ENCODE measurements at regions of chr14 and their contacts with region 1.

Region 1: DNA sequence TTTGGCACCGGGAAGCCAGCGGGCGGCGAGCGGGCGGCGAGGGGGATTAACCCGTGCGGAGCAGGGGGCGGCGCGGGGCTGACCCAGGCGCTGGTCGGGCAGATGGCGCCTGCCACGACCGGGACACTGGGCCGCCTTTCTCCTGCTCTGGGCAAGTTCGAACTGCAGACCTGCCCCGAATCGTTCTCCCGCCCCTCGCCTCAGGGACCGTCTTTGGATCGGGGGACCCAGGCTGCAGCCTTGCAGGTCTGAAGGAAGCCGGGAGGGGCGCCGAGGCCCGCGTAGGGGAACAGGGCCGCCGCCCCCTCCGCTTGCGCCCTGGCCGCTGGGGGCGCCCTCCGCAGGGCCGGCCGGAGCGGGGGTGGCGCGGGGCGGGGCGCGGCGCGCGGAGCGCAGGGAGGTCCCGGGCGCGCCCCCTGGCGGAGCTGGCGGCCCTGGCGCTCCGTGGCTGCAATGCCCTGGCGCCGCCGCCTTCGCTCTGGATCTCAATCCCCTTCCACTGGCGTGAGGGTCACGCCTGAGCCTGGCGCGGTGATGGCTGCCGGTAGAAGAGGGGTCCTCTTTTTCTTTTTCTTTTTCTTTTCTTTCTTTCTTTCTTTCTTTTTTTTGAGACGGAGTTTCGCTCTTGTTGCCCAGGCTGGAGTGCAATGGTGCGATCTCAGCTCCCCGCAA is 449 bp upstream of the LTBP2 start:
- DNase-seq: peak; percentile 95
- H3K4me3 ChIP-seq: peak overlapping the region; percentile 68 to 73
- H3K27ac ChIP-seq: peak overlapping the region; percentile 75 to 99
- H3K4me1 ChIP-seq: peaks cover 17 to 37% of the 10 kb centered on the region in 2 experiments; a peak in 3 of 4 replicates
- H3K27me3 ChIP-seq: no peaks in the 10 kb centered on the region
- CTCF ChIP-seq: peak; percentile 63
- EP300 ChIP-seq: peak in 1 of 2 experiments; percentile 38; a peak in 1 of 4 replicates
- RAD21 ChIP-seq: peak; percentile 54

Region 2: DNA sequence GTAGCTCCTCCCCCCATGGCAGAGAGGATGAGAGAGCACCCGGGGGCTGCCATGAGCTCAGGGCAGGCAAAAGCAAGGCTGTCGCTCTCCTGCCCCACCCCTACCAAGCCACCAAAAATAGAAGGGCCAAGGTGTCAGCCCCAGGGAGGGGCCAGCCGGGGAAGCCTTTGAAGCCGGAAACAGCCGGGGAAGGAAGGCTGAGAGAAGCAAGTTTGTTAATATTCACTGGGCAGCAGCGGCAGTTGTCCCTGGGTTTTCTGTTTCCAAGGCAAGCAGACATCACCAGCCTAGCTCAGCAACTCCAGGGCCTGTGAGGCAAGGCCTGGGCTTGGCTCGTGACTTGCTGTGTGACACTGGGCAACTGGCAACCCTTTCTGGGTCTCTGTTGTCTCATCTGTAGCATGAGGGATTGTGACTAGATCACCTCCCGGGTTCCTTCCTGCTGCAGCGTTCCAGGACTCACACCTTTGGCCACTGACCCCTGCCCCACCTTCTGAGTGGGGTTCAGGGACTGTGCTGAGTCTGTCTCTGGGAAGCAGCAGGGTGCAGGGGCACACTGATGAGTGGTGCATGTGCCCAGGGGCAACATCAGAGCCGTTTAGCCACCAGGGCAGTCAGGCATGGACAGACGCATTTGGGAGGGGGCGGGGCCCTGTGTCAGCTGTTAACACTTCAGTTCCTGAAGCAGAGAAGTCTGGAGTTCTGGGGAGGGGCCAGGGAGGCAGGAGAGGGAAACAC is 210.8 kb before region 1 on chr14:
- CTCF ChIA-PET with region 1: no interaction called
- POLR2A ChIA-PET with region 1: no interaction called
- DNase-seq: peak; percentile 63
- H3K4me3 ChIP-seq: no peak overlapping the region
- H3K27ac ChIP-seq: no peak overlapping the region
- H3K4me1 ChIP-seq: peaks cover 0 to 10% of the 10 kb centered on the region in 2 experiments; a peak in 1 of 4 replicates
- H3K27me3 ChIP-seq: peaks cover 37% of the 10 kb centered on the region
- CTCF ChIP-seq: no peak
- EP300 ChIP-seq: no peak
- RAD21 ChIP-seq: no peak

Region 3: DNA sequence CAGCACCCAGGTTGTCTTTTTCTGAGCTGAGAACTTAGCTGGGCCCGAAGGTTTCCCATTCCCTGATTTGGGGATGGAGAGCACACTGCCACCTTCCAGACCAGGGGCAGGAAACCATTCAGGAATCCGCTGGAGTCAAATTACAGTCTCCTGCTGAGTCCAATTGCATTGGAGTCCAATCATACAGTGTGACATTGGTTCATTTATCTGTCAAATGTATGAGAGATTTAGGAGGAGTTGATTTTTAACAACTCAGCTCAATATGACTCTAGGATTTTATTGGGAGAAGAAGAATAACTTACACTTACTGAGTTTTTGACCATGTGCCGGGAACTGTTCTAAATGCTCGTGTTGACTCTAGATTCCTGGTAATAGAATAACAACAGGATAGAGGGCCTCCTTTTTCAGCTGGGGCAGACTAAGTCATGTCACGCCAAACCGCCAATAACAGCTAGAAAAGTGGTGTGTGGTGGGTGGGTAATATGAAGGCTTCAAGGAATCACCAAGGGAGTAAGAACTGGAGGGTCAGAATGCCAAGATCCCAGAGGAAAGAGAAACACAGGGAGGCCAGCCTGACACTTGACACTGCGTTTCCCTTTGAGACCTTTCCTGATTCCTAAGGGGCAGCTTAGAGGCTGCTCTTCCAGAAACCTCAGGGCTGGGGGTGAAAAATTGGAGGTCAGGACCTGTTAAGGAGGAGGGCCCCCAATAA is 197.9 kb before region 1 on chr14:
- CTCF ChIA-PET with region 1: no interaction called
- POLR2A ChIA-PET with region 1: no interaction called
- DNase-seq: no peak
- H3K4me3 ChIP-seq: no peak overlapping the region
- H3K27ac ChIP-seq: no peak overlapping the region
- H3K4me1 ChIP-seq: peaks cover 0 to 6% of the 10 kb centered on the region in 2 experiments; a peak in 1 of 4 replicates
- H3K27me3 ChIP-seq: peaks cover 8% of the 10 kb centered on the region; the same call in 1 of the 2 replicates
- CTCF ChIP-seq: no peak
- EP300 ChIP-seq: no peak
- RAD21 ChIP-seq: no peak

Region 4: GRCh38 chr14:74493343-74494261 is 118.9 kb before region 1 on chr14 and contains the start of gene ISCA2:
- CTCF ChIA-PET with region 1: interaction called, 126 read pairs
- POLR2A ChIA-PET with region 1: interaction called, 3 read pairs
- DNase-seq: peak; percentile 99
- H3K4me3 ChIP-seq: peak within 1 kb of the TSS; percentile 87 to 91
- H3K27ac ChIP-seq: peak within 1 kb of the TSS; percentile 56 to 80
- H3K4me1 ChIP-seq: peaks cover 13 to 20% of the 10 kb centered on the region in 2 experiments; a peak in 3 of 4 replicates
- H3K27me3 ChIP-seq: no peaks in the 10 kb centered on the region
- CTCF ChIP-seq: no peak
- EP300 ChIP-seq: no peak
- RAD21 ChIP-seq: no peak
- polyA plus RNA-seq, gene ISCA2: 37.3 and 51.9 TPM in 2 replicates

Region 5: GRCh38 chr14:74538411-74539391 is 73.8 kb before region 1 on chr14:
- CTCF ChIA-PET with region 1: interaction called, 10 read pairs
- POLR2A ChIA-PET with region 1: no interaction called
- DNase-seq: no peak
- H3K4me3 ChIP-seq: no peak overlapping the region
- H3K27ac ChIP-seq: no peak overlapping the region
- H3K4me1 ChIP-seq: peaks cover 0 to 10% of the 10 kb centered on the region in 2 experiments; a peak in 1 of 4 replicates
- H3K27me3 ChIP-seq: no peaks in the 10 kb centered on the region
- CTCF ChIP-seq: no peak
- EP300 ChIP-seq: no peak
- RAD21 ChIP-seq: no peak

Region 6: DNA sequence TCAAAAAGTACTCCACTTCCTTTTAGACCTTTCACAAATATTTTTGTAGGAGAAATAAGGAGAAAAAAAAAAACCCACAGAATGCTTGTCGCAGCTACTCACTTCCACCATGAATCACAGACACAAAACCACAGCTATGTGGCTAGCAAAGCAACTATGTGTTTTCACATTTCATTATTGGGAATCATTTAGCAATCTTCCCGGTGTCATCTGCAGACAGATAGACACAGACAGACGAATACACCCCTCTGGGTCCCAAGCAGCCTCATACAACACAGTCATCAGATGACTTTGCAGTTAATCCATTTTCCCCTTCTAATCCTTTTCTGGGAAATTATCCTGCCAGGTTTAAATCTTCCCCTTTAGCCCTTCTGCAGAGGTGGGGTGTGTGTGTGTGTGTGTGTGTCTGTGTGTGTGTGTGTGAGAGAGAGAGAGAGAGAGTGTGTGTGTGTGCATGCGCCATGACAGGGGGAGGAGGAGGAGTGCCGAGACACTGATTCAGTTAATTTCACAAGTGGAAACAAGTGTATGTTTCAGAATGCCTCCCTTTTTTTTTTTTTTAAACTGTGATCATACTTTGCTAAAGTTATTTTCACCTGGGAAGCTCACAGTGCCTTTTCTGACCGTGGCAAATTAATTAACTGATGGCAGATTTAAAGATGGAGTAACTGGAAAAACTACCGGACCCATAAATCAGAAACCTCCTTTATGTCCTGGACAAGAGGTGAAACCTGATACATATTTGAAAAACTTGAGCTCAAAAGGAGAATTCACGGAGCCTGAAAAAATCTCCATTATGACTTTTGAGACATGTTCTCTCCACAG is 40.4 kb before region 1 on chr14:
- CTCF ChIA-PET with region 1: interaction called, 51 read pairs
- POLR2A ChIA-PET with region 1: no interaction called
- DNase-seq: no peak
- H3K4me3 ChIP-seq: peak overlapping the region in 1 of 2 experiments; percentile 35; a peak in 3 of 4 replicates
- H3K27ac ChIP-seq: peak overlapping the region; percentile 92 to 97
- H3K4me1 ChIP-seq: peaks cover 52 to 92% of the 10 kb centered on the region in 2 experiments
- H3K27me3 ChIP-seq: no peaks in the 10 kb centered on the region
- CTCF ChIP-seq: no peak
- EP300 ChIP-seq: peak; percentile 33 to 96; a peak in 3 of 4 replicates
- RAD21 ChIP-seq: no peak

Region 7: DNA sequence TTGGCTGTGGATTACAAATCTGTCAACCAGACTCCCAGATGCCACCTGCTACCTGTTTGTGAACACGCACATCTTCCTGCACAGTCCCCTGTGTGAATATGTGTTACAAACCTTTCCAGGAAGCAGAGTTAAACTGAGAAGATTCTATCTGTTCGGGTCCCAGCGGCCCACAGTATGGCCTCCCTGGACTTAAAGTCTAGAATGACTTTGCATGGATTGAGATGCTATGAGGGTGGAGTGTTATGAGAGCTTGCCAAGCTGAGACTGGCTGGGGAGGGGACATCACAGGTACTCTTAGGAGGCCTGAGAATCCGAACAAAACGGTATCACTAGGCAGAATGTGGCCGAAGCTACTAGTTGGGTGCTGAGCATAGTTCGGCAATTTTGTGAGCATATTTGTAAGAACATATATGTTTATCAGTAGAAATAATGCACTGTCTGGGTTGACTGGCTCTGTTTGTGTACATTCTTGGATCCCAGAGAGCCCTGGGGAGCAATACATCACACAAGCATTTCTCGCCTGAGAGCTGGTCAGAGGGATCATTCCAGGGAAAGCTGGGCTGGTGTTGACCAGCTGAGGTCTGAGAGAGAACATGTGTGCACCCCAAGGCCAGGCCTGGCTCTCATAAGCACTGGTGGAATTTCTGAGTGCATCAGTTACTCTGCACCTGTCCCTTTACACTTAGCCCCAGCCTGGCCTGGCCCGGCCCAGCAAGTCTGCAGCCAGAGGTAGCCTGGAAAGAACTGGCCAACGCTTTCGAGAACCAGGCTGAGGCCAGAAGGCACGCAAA is 29.3 kb after region 1 on chr14:
- CTCF ChIA-PET with region 1: interaction called, 64 read pairs
- POLR2A ChIA-PET with region 1: no interaction called
- DNase-seq: no peak
- H3K4me3 ChIP-seq: no peak overlapping the region
- H3K27ac ChIP-seq: no peak overlapping the region
- H3K4me1 ChIP-seq: peaks cover 0 to 20% of the 10 kb centered on the region in 2 experiments; a peak in 2 of 4 replicates
- H3K27me3 ChIP-seq: no peaks in the 10 kb centered on the region
- CTCF ChIP-seq: no peak
- EP300 ChIP-seq: no peak
- RAD21 ChIP-seq: no peak

Region 8: DNA sequence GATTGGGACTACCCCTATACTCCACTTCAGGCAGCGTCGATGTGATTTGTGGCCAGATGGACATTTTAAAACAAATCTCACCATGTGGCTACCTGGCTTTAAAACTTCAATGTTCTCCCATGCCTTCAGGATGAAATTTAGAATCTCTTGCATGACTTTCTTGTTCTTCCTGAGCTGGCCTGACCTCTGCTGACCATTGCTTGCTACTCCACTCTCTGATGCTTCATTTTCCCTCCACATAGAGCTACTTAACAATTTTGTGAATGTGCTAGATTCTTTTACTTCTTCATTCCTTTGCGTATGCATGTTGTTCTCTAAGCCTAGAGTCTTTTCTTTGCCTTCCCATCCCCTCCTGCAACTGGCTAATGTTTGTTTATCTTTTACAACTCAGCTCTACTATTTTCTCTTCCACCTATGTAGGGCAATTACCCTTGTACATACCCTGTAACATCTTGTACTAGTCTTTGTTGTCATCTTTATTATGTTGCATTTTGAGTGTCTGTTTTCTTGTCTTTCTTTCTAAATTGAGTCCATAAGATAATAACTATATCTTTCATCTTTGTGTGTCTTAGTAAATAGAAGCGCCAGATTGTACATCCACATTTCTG is 191.8 kb after region 1 on chr14:
- CTCF ChIA-PET with region 1: interaction called, 10 read pairs
- POLR2A ChIA-PET with region 1: no interaction called
- DNase-seq: peak; percentile 44
- H3K4me3 ChIP-seq: no peak overlapping the region; a peak in 1 of 4 replicates
- H3K27ac ChIP-seq: no peak overlapping the region
- H3K4me1 ChIP-seq: no peaks in the 10 kb centered on the region; a peak in 2 of 4 replicates
- H3K27me3 ChIP-seq: no peaks in the 10 kb centered on the region
- CTCF ChIP-seq: peak; percentile 83
- EP300 ChIP-seq: no peak
- RAD21 ChIP-seq: peak; percentile 76